CD4-positive, alpha-beta T cell (primary cell): ENCODE measurements at regions of chr5 and their contacts with region 1.

Region 1: GRCh38 chr5:134113902-134114875 is at the start of gene TCF7:
- DNase-seq: peak; percentile 64 to 92 (median 82)
- ATAC-seq: peak; percentile 67
- H3K4me3 ChIP-seq: peak within 1 kb of the TSS; percentile 97
- H3K4me3 Mint-ChIP-seq: peak within 1 kb of the TSS; percentile 98
- H3K27ac ChIP-seq: peak within 1 kb of the TSS; percentile 80 to 96
- H3K27ac Mint-ChIP-seq: peak within 1 kb of the TSS; percentile 98
- H3K4me1 ChIP-seq: peaks cover 73% of the 10 kb centered on the region
- H3K4me1 Mint-ChIP-seq: peaks cover 56% of the 10 kb centered on the region
- H3K27me3 ChIP-seq: no peaks in the 10 kb centered on the region
- H3K27me3 Mint-ChIP-seq: no peaks in the 10 kb centered on the region
- CTCF ChIP-seq: no peak
- total RNA-seq, gene TCF7: 480 to 493 TPM

Region 2: GRCh38 chr5:132162945-132163344 is 1951.2 kb before region 1 on chr5:
- CTCF ChIA-PET with region 1: no interaction called
- POLR2A ChIA-PET with region 1: no interaction called
- intact Hi-C with region 1: no loop called
- DNase-seq: no peak
- ATAC-seq: no peak
- H3K4me3 ChIP-seq: no peak overlapping the region
- H3K4me3 Mint-ChIP-seq: no peak overlapping the region
- H3K27ac ChIP-seq: no peak overlapping the region
- H3K27ac Mint-ChIP-seq: no peak overlapping the region
- H3K4me1 ChIP-seq: no peaks in the 10 kb centered on the region
- H3K4me1 Mint-ChIP-seq: no peaks in the 10 kb centered on the region
- H3K27me3 ChIP-seq: no peaks in the 10 kb centered on the region
- H3K27me3 Mint-ChIP-seq: peaks cover 7% of the 10 kb centered on the region
- CTCF ChIP-seq: no peak

Region 3: GRCh38 chr5:133919148-133920136 is 194.7 kb before region 1 on chr5:
- CTCF ChIA-PET with region 1: no interaction called
- POLR2A ChIA-PET with region 1: no interaction called
- intact Hi-C with region 1: no loop called
- DNase-seq: no peak
- ATAC-seq: no peak
- H3K4me3 ChIP-seq: no peak overlapping the region
- H3K4me3 Mint-ChIP-seq: no peak overlapping the region
- H3K27ac ChIP-seq: no peak overlapping the region
- H3K27ac Mint-ChIP-seq: no peak overlapping the region
- H3K4me1 ChIP-seq: no peaks in the 10 kb centered on the region
- H3K4me1 Mint-ChIP-seq: no peaks in the 10 kb centered on the region
- H3K27me3 ChIP-seq: no peaks in the 10 kb centered on the region
- H3K27me3 Mint-ChIP-seq: no peaks in the 10 kb centered on the region
- CTCF ChIP-seq: no peak

Region 4: GRCh38 chr5:133932441-133933168 is 181.6 kb before region 1 on chr5:
- CTCF ChIA-PET with region 1: no interaction called
- POLR2A ChIA-PET with region 1: no interaction called
- intact Hi-C with region 1: no loop called
- DNase-seq: peak in 3 of 14 experiments; percentile 5 to 43 (median 32)
- ATAC-seq: no peak
- H3K4me3 ChIP-seq: no peak overlapping the region
- H3K4me3 Mint-ChIP-seq: no peak overlapping the region
- H3K27ac ChIP-seq: no peak overlapping the region
- H3K27ac Mint-ChIP-seq: no peak overlapping the region
- H3K4me1 ChIP-seq: peaks cover 21% of the 10 kb centered on the region
- H3K4me1 Mint-ChIP-seq: peaks cover 25% of the 10 kb centered on the region
- H3K27me3 ChIP-seq: no peaks in the 10 kb centered on the region
- H3K27me3 Mint-ChIP-seq: no peaks in the 10 kb centered on the region
- CTCF ChIP-seq: no peak

Region 5: DNA sequence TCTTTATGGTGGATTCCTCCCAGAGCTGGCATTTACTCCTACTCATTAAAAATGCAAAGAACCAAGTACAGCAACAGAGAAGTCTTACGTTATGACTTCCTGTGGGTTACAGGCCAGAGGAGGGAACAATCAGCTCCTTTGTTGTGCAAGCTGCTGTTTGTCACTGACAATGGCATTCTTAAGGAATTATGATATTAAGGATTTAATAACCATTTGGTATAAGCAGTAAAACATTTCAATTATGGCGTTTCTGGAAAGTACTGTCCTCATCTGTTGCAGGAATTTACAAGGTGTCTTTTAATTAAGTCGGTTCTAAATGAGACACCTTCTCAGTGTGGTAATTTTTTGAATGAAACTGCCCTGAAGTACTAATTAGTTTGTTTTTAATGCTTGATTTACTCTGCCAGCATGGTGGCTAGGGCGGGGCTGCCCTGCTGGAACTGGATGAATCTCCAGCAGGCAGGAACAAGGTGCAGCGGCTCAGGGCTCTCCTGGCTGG is 60.3 kb before region 1 on chr5:
- CTCF ChIA-PET with region 1: no interaction called
- POLR2A ChIA-PET with region 1: interaction called, 29 read pairs
- intact Hi-C with region 1: no loop called
- DNase-seq: peak in 4 of 14 experiments; percentile 45 to 56 (median 48)
- ATAC-seq: peak; percentile 84
- H3K4me3 ChIP-seq: no peak overlapping the region
- H3K4me3 Mint-ChIP-seq: peak overlapping the region; percentile 77
- H3K27ac ChIP-seq: peak overlapping the region; percentile 43 to 52
- H3K27ac Mint-ChIP-seq: peak overlapping the region; percentile 86
- H3K4me1 ChIP-seq: peaks cover 45% of the 10 kb centered on the region
- H3K4me1 Mint-ChIP-seq: peaks cover 55% of the 10 kb centered on the region
- H3K27me3 ChIP-seq: no peaks in the 10 kb centered on the region
- H3K27me3 Mint-ChIP-seq: no peaks in the 10 kb centered on the region
- CTCF ChIP-seq: no peak

Region 6: GRCh38 chr5:134077926-134078580 is 36.1 kb before region 1 on chr5:
- CTCF ChIA-PET with region 1: interaction called, 3 read pairs
- POLR2A ChIA-PET with region 1: interaction called, 20 read pairs
- intact Hi-C with region 1: loop called in 1 of 2 experiments (anchors 2 kb)
- DNase-seq: peak in 5 of 14 experiments; percentile 33 to 65 (median 50)
- ATAC-seq: peak; percentile 55
- H3K4me3 ChIP-seq: no peak overlapping the region
- H3K4me3 Mint-ChIP-seq: peak overlapping the region; percentile 70
- H3K27ac ChIP-seq: peak overlapping the region in 1 of 2 donors; percentile 32
- H3K27ac Mint-ChIP-seq: peak overlapping the region; percentile 95
- H3K4me1 ChIP-seq: peaks cover 66% of the 10 kb centered on the region
- H3K4me1 Mint-ChIP-seq: peaks cover 77% of the 10 kb centered on the region
- H3K27me3 ChIP-seq: no peaks in the 10 kb centered on the region
- H3K27me3 Mint-ChIP-seq: no peaks in the 10 kb centered on the region
- CTCF ChIP-seq: no peak

Region 7: DNA sequence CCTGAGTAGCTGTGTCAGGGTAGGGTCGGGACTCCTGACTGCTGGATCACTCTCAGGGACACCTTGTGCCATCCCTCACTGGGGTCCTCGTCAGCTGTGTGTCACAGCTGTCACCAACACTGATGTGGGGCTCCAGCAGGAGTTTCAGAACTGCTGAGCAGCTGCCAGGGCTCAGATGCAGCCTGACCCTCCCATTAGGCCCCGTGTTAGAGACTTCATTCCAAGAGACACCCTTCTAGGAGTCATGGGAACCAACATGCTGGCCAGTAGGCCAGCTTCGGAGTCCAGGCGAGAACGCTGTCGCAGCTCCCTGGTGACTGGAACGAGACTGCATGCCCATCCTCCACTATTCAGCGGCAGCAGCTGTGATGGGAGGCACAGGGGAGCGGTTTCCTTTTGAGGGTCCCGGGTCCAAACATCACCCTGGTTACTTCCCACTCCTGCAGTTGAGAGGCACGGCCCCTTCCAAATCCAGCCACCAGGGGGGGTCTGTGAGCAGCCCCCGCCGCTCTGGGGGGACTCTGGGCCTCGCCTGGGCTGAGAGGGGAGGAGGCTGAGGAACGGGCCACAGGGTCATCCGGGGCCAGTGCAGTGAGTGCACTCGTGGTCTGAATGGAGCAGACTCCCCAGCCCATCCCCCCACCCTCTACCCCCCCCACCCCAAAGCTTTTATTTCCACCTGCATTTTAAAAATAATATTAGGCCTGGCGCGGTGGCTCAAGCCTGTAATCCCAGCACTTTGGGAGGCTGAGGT is 12.3 kb before region 1 on chr5:
- CTCF ChIA-PET with region 1: interaction called, 35 read pairs
- POLR2A ChIA-PET with region 1: no interaction called
- intact Hi-C with region 1: loop called in 1 of 2 experiments (anchors 1 kb)
- DNase-seq: peak; percentile 59 to 84 (median 73)
- ATAC-seq: peak; percentile 28
- H3K4me3 ChIP-seq: no peak overlapping the region
- H3K4me3 Mint-ChIP-seq: no peak overlapping the region
- H3K27ac ChIP-seq: peak overlapping the region; percentile 56 to 97
- H3K27ac Mint-ChIP-seq: peak overlapping the region; percentile 94
- H3K4me1 ChIP-seq: peaks cover 98% of the 10 kb centered on the region
- H3K4me1 Mint-ChIP-seq: peaks cover 94% of the 10 kb centered on the region
- H3K27me3 ChIP-seq: no peaks in the 10 kb centered on the region
- H3K27me3 Mint-ChIP-seq: no peaks in the 10 kb centered on the region
- CTCF ChIP-seq: peak; percentile 92

Region 8: DNA sequence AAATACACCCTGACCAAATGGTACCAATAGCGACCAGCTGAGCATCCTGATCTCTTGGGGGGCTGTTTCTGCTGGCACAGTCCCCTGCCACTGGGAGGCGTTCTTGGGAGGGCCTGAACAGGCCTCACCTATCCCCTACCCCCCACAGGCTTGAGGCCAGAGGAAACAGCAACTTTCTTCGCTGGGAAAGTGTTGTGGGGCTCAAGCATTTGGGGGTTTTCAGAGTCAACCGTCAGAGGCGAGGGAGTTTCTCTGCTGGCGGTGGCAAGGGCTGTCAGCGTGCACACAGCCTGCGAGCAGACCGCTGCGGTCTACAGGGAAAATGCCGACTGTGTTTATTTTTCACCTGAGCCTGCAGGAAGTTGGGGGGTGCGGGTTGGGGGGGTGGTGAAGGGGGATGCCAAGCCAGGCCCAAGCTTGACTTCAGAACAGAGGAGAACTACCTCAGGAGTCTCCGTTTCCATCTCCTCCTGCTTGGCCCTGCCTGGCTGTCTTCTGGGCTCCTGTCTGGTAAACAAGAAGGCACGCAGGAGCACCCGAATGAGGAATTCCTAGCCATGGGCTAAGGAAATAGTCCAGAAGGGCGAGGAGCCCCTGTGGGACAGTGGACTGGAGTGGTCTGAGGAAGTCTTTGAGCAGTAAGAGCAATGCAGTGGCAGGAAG is 18.3 kb after region 1 on chr5:
- CTCF ChIA-PET with region 1: interaction called, 20 read pairs
- POLR2A ChIA-PET with region 1: no interaction called
- intact Hi-C with region 1: loop called (anchors 1 to 2 kb)
- DNase-seq: peak; percentile 68 to 97 (median 78)
- ATAC-seq: peak; percentile 74
- H3K4me3 ChIP-seq: peak overlapping the region; percentile 92
- H3K4me3 Mint-ChIP-seq: peak overlapping the region; percentile 95
- H3K27ac ChIP-seq: peak overlapping the region; percentile 83 to 96
- H3K27ac Mint-ChIP-seq: peak overlapping the region; percentile 98
- H3K4me1 ChIP-seq: peaks cover 100% of the 10 kb centered on the region
- H3K4me1 Mint-ChIP-seq: peaks cover 100% of the 10 kb centered on the region
- H3K27me3 ChIP-seq: no peaks in the 10 kb centered on the region
- H3K27me3 Mint-ChIP-seq: no peaks in the 10 kb centered on the region
- CTCF ChIP-seq: peak; percentile 30